CD8-positive, alpha-beta T cell (primary cell): ENCODE measurements at regions of chr3 and their contacts with region 1.

Region 1: GRCh38 chr3:98593046-98593936 is at the start of gene CPOX:
- DNase-seq: peak; percentile 54 to 87 (median 80)
- ATAC-seq: peak; percentile 96
- H3K4me3 ChIP-seq: peak within 1 kb of the TSS; percentile 70 to 92
- H3K4me3 Mint-ChIP-seq: peak within 1 kb of the TSS; percentile 99
- H3K27ac ChIP-seq: peak within 1 kb of the TSS; percentile 61 to 74
- H3K27ac Mint-ChIP-seq: peak within 1 kb of the TSS; percentile 95
- H3K4me1 ChIP-seq: peaks cover 15% of the 10 kb centered on the region
- H3K4me1 Mint-ChIP-seq: peaks cover 35% of the 10 kb centered on the region
- H3K27me3 ChIP-seq: no peaks in the 10 kb centered on the region
- H3K27me3 Mint-ChIP-seq: no peaks in the 10 kb centered on the region
- CTCF ChIP-seq: no peak
- total RNA-seq, gene CPOX: 7.5 to 7.7 TPM

Region 2: GRCh38 chr3:97764407-97765238 is 828.7 kb before region 1 on chr3 and contains the start of gene ARL6:
- CTCF ChIA-PET with region 1: no interaction called
- POLR2A ChIA-PET with region 1: no interaction called
- intact Hi-C with region 1: loop called (anchors 1 to 2 kb)
- DNase-seq: peak; percentile 28 to 83 (median 70)
- ATAC-seq: peak; percentile 90
- H3K4me3 ChIP-seq: peak within 1 kb of the TSS; percentile 76 to 88
- H3K4me3 Mint-ChIP-seq: peak within 1 kb of the TSS; percentile 98
- H3K27ac ChIP-seq: peak within 1 kb of the TSS; percentile 64 to 72
- H3K27ac Mint-ChIP-seq: peak within 1 kb of the TSS; percentile 95
- H3K4me1 ChIP-seq: peaks cover 14% of the 10 kb centered on the region
- H3K4me1 Mint-ChIP-seq: peaks cover 34% of the 10 kb centered on the region
- H3K27me3 ChIP-seq: no peaks in the 10 kb centered on the region
- H3K27me3 Mint-ChIP-seq: no peaks in the 10 kb centered on the region
- CTCF ChIP-seq: no peak
- total RNA-seq, gene ARL6: 0.97 to 1.1 TPM

Region 3: DNA sequence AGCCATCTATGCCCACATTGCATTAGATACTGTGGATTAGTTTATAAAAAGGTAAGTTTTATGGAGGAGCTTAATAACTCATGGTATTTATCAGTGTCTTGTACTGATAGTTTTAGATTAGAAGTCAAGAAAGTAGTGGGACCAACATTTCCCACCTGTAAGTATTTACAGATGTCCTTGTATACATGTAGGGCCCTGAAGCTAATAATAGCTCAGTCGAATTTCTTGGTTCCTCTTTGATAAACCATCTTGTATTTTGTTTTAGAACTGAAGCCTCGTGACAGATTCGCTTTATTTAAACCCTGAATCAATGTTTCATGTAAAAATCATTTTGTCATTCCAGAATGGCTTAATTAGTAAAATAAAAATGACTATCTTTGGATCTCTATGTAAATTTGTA is 698.1 kb before region 1 on chr3:
- CTCF ChIA-PET with region 1: no interaction called
- POLR2A ChIA-PET with region 1: no interaction called
- intact Hi-C with region 1: no loop called
- DNase-seq: no peak
- ATAC-seq: no peak
- H3K4me3 ChIP-seq: no peak overlapping the region
- H3K4me3 Mint-ChIP-seq: no peak overlapping the region
- H3K27ac ChIP-seq: no peak overlapping the region
- H3K27ac Mint-ChIP-seq: no peak overlapping the region
- H3K4me1 ChIP-seq: no peaks in the 10 kb centered on the region
- H3K4me1 Mint-ChIP-seq: no peaks in the 10 kb centered on the region
- H3K27me3 ChIP-seq: no peaks in the 10 kb centered on the region
- H3K27me3 Mint-ChIP-seq: no peaks in the 10 kb centered on the region
- CTCF ChIP-seq: no peak

Region 4: GRCh38 chr3:98039322-98040024 is 553.8 kb before region 1 on chr3:
- CTCF ChIA-PET with region 1: interaction called, 6 read pairs
- POLR2A ChIA-PET with region 1: no interaction called
- intact Hi-C with region 1: loop called (anchors 2 to 5 kb)
- DNase-seq: peak; percentile 27 to 89 (median 66)
- ATAC-seq: peak; percentile 96
- H3K4me3 ChIP-seq: peak overlapping the region; percentile 37 to 38
- H3K4me3 Mint-ChIP-seq: peak overlapping the region; percentile 81
- H3K27ac ChIP-seq: peak overlapping the region; percentile 33 to 57
- H3K27ac Mint-ChIP-seq: peak overlapping the region; percentile 92
- H3K4me1 ChIP-seq: no peaks in the 10 kb centered on the region
- H3K4me1 Mint-ChIP-seq: peaks cover 7% of the 10 kb centered on the region
- H3K27me3 ChIP-seq: no peaks in the 10 kb centered on the region
- H3K27me3 Mint-ChIP-seq: peaks cover 22% of the 10 kb centered on the region
- CTCF ChIP-seq: peak; percentile 100

Region 5: GRCh38 chr3:98513736-98514135 is 79.6 kb before region 1 on chr3:
- CTCF ChIA-PET with region 1: no interaction called
- POLR2A ChIA-PET with region 1: no interaction called
- intact Hi-C with region 1: no loop called
- DNase-seq: no peak
- ATAC-seq: no peak
- H3K4me3 ChIP-seq: no peak overlapping the region
- H3K4me3 Mint-ChIP-seq: no peak overlapping the region
- H3K27ac ChIP-seq: no peak overlapping the region
- H3K27ac Mint-ChIP-seq: no peak overlapping the region
- H3K4me1 ChIP-seq: no peaks in the 10 kb centered on the region
- H3K4me1 Mint-ChIP-seq: peaks cover 43% of the 10 kb centered on the region
- H3K27me3 ChIP-seq: no peaks in the 10 kb centered on the region
- H3K27me3 Mint-ChIP-seq: no peaks in the 10 kb centered on the region
- CTCF ChIP-seq: no peak

Region 6: GRCh38 chr3:98692787-98693473 is 99.6 kb after region 1 on chr3:
- CTCF ChIA-PET with region 1: no interaction called
- POLR2A ChIA-PET with region 1: no interaction called
- intact Hi-C with region 1: no loop called
- DNase-seq: peak in 1 of 9 experiments; percentile 7
- ATAC-seq: no peak
- H3K4me3 ChIP-seq: no peak overlapping the region
- H3K4me3 Mint-ChIP-seq: no peak overlapping the region
- H3K27ac ChIP-seq: no peak overlapping the region
- H3K27ac Mint-ChIP-seq: no peak overlapping the region
- H3K4me1 ChIP-seq: no peaks in the 10 kb centered on the region
- H3K4me1 Mint-ChIP-seq: no peaks in the 10 kb centered on the region
- H3K27me3 ChIP-seq: no peaks in the 10 kb centered on the region
- H3K27me3 Mint-ChIP-seq: peaks cover 2% of the 10 kb centered on the region
- CTCF ChIP-seq: no peak

Region 7: GRCh38 chr3:98901392-98902350 is 308.4 kb after region 1 on chr3 and contains the start of gene DCBLD2:
- CTCF ChIA-PET with region 1: no interaction called
- POLR2A ChIA-PET with region 1: no interaction called
- intact Hi-C with region 1: loop called (anchors 5 kb)
- DNase-seq: peak; percentile 75 to 96 (median 87)
- ATAC-seq: peak; percentile 97
- H3K4me3 ChIP-seq: peak within 1 kb of the TSS; percentile 62 to 91
- H3K4me3 Mint-ChIP-seq: peak within 1 kb of the TSS; percentile 94
- H3K27ac ChIP-seq: peak within 1 kb of the TSS; percentile 37 to 46
- H3K27ac Mint-ChIP-seq: peak within 1 kb of the TSS; percentile 73
- H3K4me1 ChIP-seq: peaks cover 15% of the 10 kb centered on the region
- H3K4me1 Mint-ChIP-seq: peaks cover 24% of the 10 kb centered on the region
- H3K27me3 ChIP-seq: no peaks in the 10 kb centered on the region
- H3K27me3 Mint-ChIP-seq: peaks cover 11% of the 10 kb centered on the region
- CTCF ChIP-seq: no peak
- total RNA-seq, gene DCBLD2: 1.6 to 1.8 TPM

Region 8: GRCh38 chr3:99817437-99818240 is 1224.3 kb after region 1 on chr3 and contains the start of gene CMSS1:
- CTCF ChIA-PET with region 1: no interaction called
- POLR2A ChIA-PET with region 1: no interaction called
- intact Hi-C with region 1: loop called in 1 of 2 experiments (anchors 10 kb)
- DNase-seq: peak; percentile 89 to 99 (median 96)
- ATAC-seq: peak; percentile 84
- H3K4me3 ChIP-seq: peak within 1 kb of the TSS; percentile 55 to 79
- H3K4me3 Mint-ChIP-seq: peak within 1 kb of the TSS; percentile 96
- H3K27ac ChIP-seq: peak within 1 kb of the TSS; percentile 90 to 95
- H3K27ac Mint-ChIP-seq: peak within 1 kb of the TSS; percentile 100
- H3K4me1 ChIP-seq: peaks cover 20% of the 10 kb centered on the region
- H3K4me1 Mint-ChIP-seq: peaks cover 41% of the 10 kb centered on the region
- H3K27me3 ChIP-seq: no peaks in the 10 kb centered on the region
- H3K27me3 Mint-ChIP-seq: no peaks in the 10 kb centered on the region
- CTCF ChIP-seq: no peak
- total RNA-seq, gene CMSS1: 9.0 to 13.7 TPM